ENCODE measurements at regions of chr10 and their contacts with region 1.

Region 1: GRCh38 chr10:107610775-107611508 is 446.4 kb upstream of the SORCS1 start:
- DNase-seq: no peak

Region 2: DNA sequence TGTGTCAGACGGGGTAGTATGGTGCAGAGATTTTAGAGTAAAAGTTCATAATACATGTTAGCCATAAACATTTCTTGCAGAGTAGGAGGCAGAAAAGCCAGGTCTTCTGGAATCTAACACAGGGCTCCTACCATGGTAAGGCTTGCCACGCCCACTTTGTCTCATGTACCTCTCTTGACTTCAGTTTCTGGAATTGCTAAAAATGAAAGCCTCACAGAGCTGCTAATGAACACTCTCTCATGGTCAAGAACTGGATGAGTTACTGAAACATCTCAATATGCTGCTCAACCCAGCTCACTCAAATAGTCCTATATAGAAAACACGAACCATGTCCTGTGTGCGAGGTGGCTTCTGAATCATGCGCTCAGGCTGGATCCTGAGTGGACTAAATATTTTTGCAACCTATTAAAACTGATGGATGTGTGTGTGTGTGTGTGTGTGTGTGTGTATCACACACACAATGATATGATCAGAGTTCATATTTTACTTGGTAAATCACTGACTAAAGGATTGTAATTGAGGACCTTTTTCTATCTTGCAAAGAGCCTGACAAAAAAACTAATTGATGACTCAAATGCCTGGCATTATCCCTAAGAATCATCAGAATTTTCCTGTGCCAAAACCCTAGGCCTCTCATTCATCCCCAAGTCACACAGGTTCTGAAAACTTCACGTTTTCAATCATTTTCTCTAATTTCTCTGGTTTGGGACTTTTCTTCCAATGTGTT is 1005.8 kb after region 1 on chr10:
- intact Hi-C with region 1: loop called in 1 of 2 experiments (anchors 10 kb)
- DNase-seq: no peak

Measured in posterior vena cava (tissue), 2 donors.